ENCODE measurements at regions of chr10 and their contacts with region 1.

Region 1: DNA sequence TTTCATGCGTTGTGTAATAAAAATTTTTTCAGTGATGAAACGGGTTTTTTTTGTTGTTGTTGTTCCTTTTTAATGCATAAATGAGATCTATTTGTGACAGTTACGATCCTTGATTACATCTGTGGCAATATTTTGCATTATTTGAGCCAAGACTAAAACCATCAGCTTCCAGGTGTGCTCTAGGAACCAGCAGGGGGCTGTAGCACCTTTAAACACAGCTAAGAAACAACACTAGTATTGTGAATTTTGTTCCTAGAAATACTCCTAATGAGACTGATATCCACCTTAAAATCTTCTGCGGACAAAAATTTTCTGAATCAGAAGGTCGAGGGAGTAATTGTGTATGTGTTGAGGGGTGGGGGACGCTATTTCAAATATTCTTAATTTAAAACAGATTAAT is 52.6 kb downstream of the FGFBP3 start:
- DNase-seq: no peak
- ATAC-seq: no peak
- H3K4me3 ChIP-seq: no peak overlapping the region
- H3K27ac ChIP-seq: no peak overlapping the region
- H3K4me1 ChIP-seq: no peaks in the 10 kb centered on the region
- H3K27me3 ChIP-seq: no peaks in the 10 kb centered on the region
- CTCF ChIP-seq: peak in 6 of 12 donors; percentile 7 to 33 (median 14)
- POLR2A ChIP-seq: no peak

Region 2: GRCh38 chr10:91820144-91820543 is 36.5 kb before region 1 on chr10:
- intact Hi-C with region 1: loop called in 3 of 10 experiments (anchors 5 to 10 kb)
- DNase-seq: no peak
- ATAC-seq: no peak
- H3K4me3 ChIP-seq: no peak overlapping the region
- H3K27ac ChIP-seq: no peak overlapping the region
- H3K4me1 ChIP-seq: peaks cover 0 to 25% (median 0%) of the 10 kb centered on the region in 12 donors
- H3K27me3 ChIP-seq: no peaks in the 10 kb centered on the region
- CTCF ChIP-seq: no peak
- POLR2A ChIP-seq: no peak

Measured in heart left ventricle (tissue), 16 donors.